A673 (cell line): ENCODE measurements at regions of chr2 and their contacts with region 1.

Region 1: DNA sequence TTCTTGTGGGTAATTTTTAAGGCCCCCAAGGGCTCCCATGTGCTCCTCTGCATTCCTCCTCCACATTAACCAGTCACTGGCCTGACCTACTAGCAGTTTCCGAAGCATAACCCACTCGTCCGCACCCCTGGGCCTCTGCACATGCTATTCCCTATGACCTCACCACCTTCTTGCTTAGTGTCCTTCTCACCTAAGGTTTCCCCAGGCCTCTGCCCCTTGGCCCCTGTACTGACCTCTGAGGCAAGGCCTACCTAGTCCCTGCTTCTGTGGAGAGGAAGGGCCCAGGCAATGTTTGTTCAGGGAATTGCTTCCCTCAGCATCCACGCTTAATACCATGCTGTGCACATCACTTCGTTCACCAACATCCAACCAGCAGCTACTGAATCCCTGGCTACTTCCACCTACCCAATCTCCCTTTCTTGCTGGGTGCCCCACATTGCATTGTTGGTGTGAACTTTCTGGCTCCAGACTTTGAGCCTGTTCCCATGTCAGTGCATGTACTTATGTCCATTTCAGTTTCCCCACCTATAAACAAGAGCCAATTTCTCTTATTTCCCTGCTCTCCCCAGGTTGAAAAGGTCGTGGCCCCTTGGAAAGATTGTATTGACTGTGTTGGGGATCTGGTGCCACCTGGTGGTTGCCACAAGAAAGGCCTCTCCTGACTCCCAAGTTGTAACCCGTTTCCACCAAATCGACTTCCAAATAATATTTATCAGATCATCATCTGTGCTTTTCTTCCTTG is 19.2 kb upstream of the TMEM177 start:
- DNase-seq: peak; percentile 54
- H3K4me3 ChIP-seq: no peak overlapping the region
- H3K27ac ChIP-seq: no peak overlapping the region
- H3K4me1 ChIP-seq: no peaks in the 10 kb centered on the region
- H3K27me3 ChIP-seq: no peaks in the 10 kb centered on the region
- CTCF ChIP-seq: peak; percentile 92

Region 2: DNA sequence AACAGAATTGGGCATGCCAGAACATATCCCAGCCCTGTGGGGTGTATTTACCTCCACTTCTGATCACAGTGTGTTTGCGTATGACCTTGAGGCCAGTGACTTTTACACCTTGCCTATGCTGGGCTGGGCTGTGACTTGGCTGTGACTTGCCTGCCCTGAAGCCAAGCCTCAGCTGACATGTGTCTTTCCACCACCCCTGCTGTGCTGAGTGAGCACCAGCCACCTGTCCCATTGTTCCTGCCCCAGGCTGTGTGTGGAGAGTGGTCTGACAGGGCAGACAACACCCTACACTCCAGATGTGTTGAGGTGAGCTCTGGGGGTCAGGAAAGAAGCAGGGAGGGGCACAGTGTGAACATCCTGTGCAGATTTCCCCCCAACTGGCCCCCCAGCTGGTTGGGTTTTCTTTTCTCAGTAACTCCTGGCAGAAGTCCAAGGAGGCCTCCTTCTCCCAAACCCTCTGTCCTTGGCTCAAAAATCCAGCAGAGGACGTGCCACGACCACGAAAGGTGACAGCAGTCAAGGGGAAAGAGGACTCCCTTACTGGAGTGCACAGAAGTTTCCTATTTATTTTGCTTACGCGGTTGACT is 441.2 kb before region 1 on chr2:
- CTCF ChIA-PET with region 1: no interaction called
- POLR2A ChIA-PET with region 1: no interaction called
- intact Hi-C with region 1: loop called (anchors 5 kb)
- DNase-seq: peak; percentile 81
- H3K4me3 ChIP-seq: no peak overlapping the region
- H3K27ac ChIP-seq: no peak overlapping the region
- H3K4me1 ChIP-seq: peaks cover 7% of the 10 kb centered on the region
- H3K27me3 ChIP-seq: no peaks in the 10 kb centered on the region
- CTCF ChIP-seq: peak; percentile 50

Region 3: GRCh38 chr2:119407430-119408220 is 252.1 kb before region 1 on chr2:
- CTCF ChIA-PET with region 1: interaction called, 3 read pairs
- POLR2A ChIA-PET with region 1: no interaction called
- intact Hi-C with region 1: loop called (anchors 1 kb)
- DNase-seq: peak; percentile 87
- H3K4me3 ChIP-seq: no peak overlapping the region
- H3K27ac ChIP-seq: peak overlapping the region; percentile 18
- H3K4me1 ChIP-seq: peaks cover 7% of the 10 kb centered on the region
- H3K27me3 ChIP-seq: no peaks in the 10 kb centered on the region
- CTCF ChIP-seq: peak; percentile 82

Region 4: GRCh38 chr2:119517433-119517832 is 142.3 kb before region 1 on chr2:
- CTCF ChIA-PET with region 1: interaction called, 6 read pairs
- POLR2A ChIA-PET with region 1: no interaction called
- intact Hi-C with region 1: loop called (anchors 5 kb)
- DNase-seq: peak; percentile 79
- H3K4me3 ChIP-seq: no peak overlapping the region
- H3K27ac ChIP-seq: no peak overlapping the region
- H3K4me1 ChIP-seq: no peaks in the 10 kb centered on the region
- H3K27me3 ChIP-seq: no peaks in the 10 kb centered on the region
- CTCF ChIP-seq: peak; percentile 84

Region 5: GRCh38 chr2:119846020-119846419 is 186.2 kb after region 1 on chr2:
- CTCF ChIA-PET with region 1: no interaction called
- POLR2A ChIA-PET with region 1: no interaction called
- intact Hi-C with region 1: no loop called
- DNase-seq: no peak
- H3K4me3 ChIP-seq: no peak overlapping the region
- H3K27ac ChIP-seq: no peak overlapping the region
- H3K4me1 ChIP-seq: peaks cover 13% of the 10 kb centered on the region
- H3K27me3 ChIP-seq: no peaks in the 10 kb centered on the region
- CTCF ChIP-seq: no peak